ENCODE measurements at regions of chr11 and their contacts with region 1.

Region 1: DNA sequence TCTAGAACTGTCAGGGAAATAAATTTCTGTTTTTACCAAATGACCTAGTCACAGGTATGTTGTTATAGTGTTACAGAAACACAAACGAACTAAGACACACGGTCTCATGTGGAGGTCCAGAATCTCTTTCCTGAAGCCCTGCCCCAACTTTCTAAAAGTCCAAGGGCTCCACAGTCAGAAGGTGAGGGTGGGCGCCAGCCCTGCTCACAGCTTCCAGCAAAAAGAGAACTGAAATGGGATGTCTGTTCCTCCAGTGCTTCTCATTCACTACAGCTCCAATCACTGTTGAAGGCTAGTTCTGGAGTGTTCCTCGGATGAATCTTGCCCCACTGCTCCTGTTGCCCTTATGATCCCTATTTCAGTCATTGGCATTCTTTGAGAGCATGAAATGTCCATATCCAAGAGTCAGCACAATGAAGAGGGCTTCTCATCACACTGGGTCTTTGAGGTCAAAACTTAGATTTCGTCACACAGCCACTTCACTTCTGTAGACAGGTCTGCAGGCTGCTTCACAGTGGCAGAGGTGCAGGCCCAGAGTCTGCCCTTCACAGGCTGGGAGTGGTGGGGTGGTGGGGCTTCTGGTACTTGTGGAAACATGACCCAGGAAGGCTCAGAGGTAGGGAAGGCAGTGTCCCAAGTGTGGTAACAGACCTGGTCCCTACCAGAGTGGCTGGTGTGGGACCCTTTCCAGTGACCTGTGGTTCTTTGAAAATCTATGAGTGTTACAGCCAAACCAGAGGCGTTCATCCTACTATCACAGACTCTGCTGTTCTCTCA is 34.9 kb downstream of the FAM181B start:
- DNase-seq: no peak
- H3K4me3 Mint-ChIP-seq: no peak overlapping the region
- H3K27ac Mint-ChIP-seq: no peak overlapping the region
- H3K4me1 Mint-ChIP-seq: no peaks in the 10 kb centered on the region
- H3K27me3 Mint-ChIP-seq: peaks cover 2% of the 10 kb centered on the region

Region 2: DNA sequence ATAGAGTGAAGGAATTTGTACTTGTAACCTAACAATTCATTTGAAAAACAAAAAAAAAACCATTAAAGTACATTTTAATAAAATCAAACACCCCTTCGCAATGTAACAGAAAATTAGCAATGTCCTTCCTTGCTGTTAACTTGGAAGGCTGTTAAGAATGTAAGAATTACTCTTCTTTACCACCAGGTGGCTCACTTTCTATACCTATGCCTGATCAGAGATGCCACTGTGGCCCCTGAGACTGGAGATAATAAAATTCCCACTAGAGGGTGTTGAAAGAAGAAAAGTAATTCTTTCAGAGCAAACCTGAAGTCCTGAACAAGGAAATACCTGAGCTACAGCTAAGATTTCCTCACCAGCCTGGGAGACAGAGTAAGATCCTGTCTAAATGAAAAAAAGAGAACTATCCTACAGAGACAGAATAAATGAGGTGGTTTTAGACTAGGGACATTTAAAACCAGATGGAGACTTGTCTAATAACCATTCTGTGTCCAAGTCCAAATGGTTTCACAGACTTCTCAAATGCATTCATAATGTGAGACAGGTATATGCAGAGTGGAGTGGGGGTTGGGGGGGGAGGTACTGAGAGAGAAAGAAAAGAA is 1054.4 kb before region 1 on chr11:
- intact Hi-C with region 1: loop called (anchors 5 kb)
- DNase-seq: peak; percentile 64
- H3K4me3 Mint-ChIP-seq: no peak overlapping the region
- H3K27ac Mint-ChIP-seq: no peak overlapping the region
- H3K4me1 Mint-ChIP-seq: no peaks in the 10 kb centered on the region
- H3K27me3 Mint-ChIP-seq: peaks cover 15% of the 10 kb centered on the region

Region 3: DNA sequence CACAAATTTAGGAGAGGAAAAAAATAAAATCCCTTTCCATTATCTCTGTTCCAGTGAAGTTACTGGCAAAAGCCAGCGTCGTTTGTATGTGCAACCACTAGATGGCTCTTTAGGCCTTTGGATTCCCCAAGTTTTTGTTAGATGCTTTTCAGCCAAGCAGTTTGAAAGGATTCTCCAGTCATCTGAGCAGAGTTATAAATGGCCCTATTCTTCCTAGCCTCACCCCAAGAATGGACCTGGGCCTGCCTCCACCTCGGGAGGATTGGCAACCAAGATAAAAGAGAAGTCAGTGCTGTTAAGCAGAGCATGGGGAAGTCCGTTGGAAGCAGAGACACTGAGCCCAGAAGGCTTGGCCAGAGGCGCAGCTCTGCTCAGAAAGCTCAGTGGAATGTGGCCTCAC is 19.5 kb after region 1 on chr11:
- intact Hi-C with region 1: no loop called
- DNase-seq: peak; percentile 63
- H3K4me3 Mint-ChIP-seq: no peak overlapping the region
- H3K27ac Mint-ChIP-seq: no peak overlapping the region
- H3K4me1 Mint-ChIP-seq: no peaks in the 10 kb centered on the region
- H3K27me3 Mint-ChIP-seq: peaks cover 2% of the 10 kb centered on the region

Measured in activated CD4-positive, alpha-beta T cell treated with anti-CD3 and anti-CD28 coated beads, Interleukin-2, amount 10 ng/mL, durations not matched to agents 24 days and 14 days (primary cell).